B cell (primary cell): ENCODE measurements at regions of chrX and their contacts with region 1.

Region 1: DNA sequence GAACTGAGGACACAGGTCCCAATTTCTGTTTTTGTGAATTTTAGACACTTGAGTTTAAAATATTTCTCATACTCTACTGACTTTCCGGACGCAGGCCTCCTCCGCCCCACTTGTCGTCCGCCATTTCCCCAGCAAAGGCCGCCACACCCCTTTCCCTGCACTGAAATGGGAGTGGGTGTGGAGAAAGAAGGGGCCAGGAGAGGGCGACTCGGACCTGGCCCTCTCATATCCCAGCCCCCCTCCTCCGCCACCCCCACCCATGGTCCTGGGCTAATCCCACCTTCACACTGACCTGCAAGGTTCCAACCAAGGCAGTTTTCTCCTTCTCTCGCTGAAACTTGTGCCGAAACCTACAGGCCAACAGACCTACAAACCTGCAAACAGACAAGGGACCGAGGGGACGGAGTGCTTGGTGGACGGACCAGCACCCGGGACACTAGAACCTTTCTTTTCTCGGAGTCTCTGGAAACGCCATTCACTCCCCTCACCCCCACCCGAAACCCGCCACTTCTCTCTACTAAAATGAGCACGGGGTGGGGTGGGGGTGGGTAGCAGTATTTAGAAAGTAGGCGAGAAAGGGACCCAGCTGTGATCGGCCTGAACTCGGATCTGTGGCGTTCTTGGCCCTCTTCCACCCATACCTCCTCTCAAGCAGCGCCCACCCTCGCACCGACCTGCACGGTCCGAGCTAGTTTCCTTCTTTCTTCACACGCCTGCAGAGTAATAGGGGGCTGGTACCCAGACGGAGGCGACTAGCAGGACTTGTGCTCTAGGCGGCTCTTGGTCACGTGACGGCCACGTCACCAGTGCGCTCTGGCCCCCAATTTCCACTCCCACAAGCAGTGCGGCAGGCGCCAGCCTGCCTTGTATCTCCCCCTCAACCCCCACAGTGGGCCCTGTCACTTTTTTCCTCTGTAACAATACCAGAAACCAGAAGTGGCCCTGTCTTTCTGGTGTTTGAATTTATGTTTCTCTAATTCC is at the start of gene ARMCX6:
- DNase-seq: peak; percentile 87
- ATAC-seq: peak; percentile 86
- H3K4me3 ChIP-seq: peak within 1 kb of the TSS; percentile 31 to 75 (median 66)
- H3K4me3 Mint-ChIP-seq: peak within 1 kb of the TSS; percentile 97
- H3K27ac ChIP-seq: peak within 1 kb of the TSS; percentile 74 to 75
- H3K27ac Mint-ChIP-seq: peak within 1 kb of the TSS; percentile 94
- H3K4me1 ChIP-seq: peaks cover 6 to 14% of the 10 kb centered on the region in 2 donors
- H3K4me1 Mint-ChIP-seq: peaks cover 14% of the 10 kb centered on the region
- H3K27me3 ChIP-seq: no peaks in the 10 kb centered on the region
- H3K27me3 Mint-ChIP-seq: no peaks in the 10 kb centered on the region
- CTCF ChIP-seq: no peak
- total RNA-seq, gene ARMCX6: 48.2 and 51.6 TPM in 2 replicates

Region 2: DNA sequence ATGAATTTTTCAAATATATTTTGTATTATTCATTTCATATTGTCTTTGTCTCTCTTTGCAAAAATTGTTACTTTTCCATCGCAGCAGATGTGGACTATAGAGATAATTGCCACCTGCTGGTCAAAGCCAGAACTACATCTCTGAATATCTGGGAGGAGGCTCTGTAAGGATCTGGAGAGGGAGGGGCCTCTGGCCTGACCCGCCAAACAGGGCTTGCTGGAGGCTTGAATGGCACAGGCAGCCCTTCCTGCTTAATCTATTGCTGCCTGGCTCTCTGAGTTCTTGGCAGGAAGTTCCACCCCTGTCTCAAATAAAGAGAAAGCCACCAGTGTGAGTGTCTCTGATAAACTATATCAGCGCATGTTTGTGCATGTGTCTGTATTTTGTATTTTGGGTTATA is 181.9 kb after region 1 on chrX:
- CTCF ChIA-PET with region 1: no interaction called
- POLR2A ChIA-PET with region 1: no interaction called
- intact Hi-C with region 1: loop called (anchors 5 kb)
- DNase-seq: peak; percentile 81
- ATAC-seq: peak; percentile 98
- H3K4me3 ChIP-seq: no peak overlapping the region
- H3K4me3 Mint-ChIP-seq: peak overlapping the region; percentile 44
- H3K27ac ChIP-seq: no peak overlapping the region
- H3K27ac Mint-ChIP-seq: no peak overlapping the region
- H3K4me1 ChIP-seq: no peaks in the 10 kb centered on the region
- H3K4me1 Mint-ChIP-seq: peaks cover 3% of the 10 kb centered on the region
- H3K27me3 ChIP-seq: no peaks in the 10 kb centered on the region
- H3K27me3 Mint-ChIP-seq: no peaks in the 10 kb centered on the region
- CTCF ChIP-seq: peak; percentile 71

Region 3: DNA sequence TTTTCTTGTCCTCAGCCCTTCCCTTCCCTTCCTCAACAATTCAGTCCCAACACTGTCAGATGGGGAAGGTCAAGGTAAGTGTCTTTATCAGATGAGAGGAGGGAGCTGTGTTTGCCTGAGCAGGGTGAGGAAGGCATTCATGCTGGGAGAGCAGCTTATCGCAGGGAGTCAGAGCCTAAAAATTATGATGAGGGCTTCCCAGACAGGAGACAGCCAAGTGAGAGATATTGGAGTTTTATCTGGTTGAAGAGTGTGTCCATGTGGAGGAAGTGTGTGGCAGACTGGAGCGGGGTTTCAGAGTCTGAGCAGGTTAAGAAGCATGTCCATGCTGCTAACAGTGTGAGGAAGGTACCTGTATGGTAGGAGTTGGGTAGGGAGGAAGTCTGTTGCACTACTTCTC is 1615.8 kb after region 1 on chrX:
- CTCF ChIA-PET with region 1: no interaction called
- POLR2A ChIA-PET with region 1: no interaction called
- intact Hi-C with region 1: no loop called
- DNase-seq: no peak
- ATAC-seq: no peak
- H3K4me3 ChIP-seq: no peak overlapping the region
- H3K4me3 Mint-ChIP-seq: no peak overlapping the region
- H3K27ac ChIP-seq: no peak overlapping the region
- H3K27ac Mint-ChIP-seq: no peak overlapping the region
- H3K4me1 ChIP-seq: no peaks in the 10 kb centered on the region
- H3K4me1 Mint-ChIP-seq: no peaks in the 10 kb centered on the region
- H3K27me3 ChIP-seq: no peaks in the 10 kb centered on the region
- H3K27me3 Mint-ChIP-seq: peaks cover 2% of the 10 kb centered on the region
- CTCF ChIP-seq: no peak